A549 (cell line): ENCODE measurements at regions of chr17 and their contacts with region 1.

Region 1: GRCh38 chr17:62109378-62109902 is 44.4 kb upstream of the MED13 start:
- DNase-seq: peak; percentile 92
- ATAC-seq: peak; percentile 96 to 99
- H3K4me3 ChIP-seq: no peak overlapping the region
- H3K27ac ChIP-seq: 0 out of 6 replicates have a peak overlapping the region, but pooled peaks of 1 of the 2 experiments have one; percentile 6
- H3K4me1 ChIP-seq: peaks cover 26% of the 10 kb centered on the region
- CTCF ChIP-seq: peak; percentile 99
- EP300 ChIP-seq: no peak
- POLR2A ChIP-seq: no peak
- RAD21 ChIP-seq: peak; percentile 99 to 100

Region 2: DNA sequence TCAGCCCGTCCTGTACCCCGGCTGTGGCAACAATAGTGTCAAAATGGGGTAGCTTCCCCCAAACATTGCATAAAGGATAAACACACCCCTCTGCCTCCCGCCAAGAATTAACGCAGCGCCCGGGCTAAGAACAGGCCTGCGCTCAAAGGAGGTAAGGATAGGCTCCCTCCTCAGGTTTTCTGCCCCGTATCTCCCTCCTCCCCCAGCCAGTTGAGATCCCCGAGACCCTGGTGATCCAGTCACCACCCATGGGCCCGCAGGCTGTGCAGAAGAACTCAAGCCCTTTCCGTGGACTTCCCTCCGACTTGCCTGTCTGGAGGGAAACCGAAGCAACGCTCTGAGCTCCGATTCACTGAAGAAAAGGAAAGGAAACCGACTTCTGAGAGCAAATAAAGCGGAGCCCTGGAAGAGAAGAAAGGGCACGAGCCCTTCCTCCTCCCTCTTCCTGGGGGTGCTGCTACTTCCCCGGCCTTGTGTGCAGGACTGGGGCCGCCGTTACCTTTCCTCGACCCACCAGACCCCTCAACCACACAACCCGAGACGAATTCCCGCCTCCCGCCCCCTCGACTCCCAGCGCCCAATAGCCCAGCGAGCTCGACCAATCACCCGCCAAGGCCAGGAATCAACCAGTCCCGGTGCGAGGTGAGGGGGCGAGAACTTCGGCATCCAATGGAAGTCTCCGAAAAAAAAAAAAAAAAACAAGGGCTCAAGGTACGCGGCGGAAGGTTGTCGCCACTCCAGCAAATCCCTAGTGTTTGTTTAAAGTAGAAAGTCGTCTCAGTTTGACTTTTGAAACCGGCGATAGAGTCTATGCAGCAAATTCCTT is 246.3 kb before region 1 on chr17 and contains the start of gene BRIP1:
- CTCF ChIA-PET with region 1: interaction called, 11 read pairs
- POLR2A ChIA-PET with region 1: interaction called, 9 read pairs
- DNase-seq: peak; percentile 97 to 98
- ATAC-seq: peak; percentile 99
- H3K4me3 ChIP-seq: peak within 1 kb of the TSS; percentile 73
- H3K27ac ChIP-seq: peak within 1 kb of the TSS; percentile 77 to 85
- H3K4me1 ChIP-seq: peaks cover 20% of the 10 kb centered on the region; the same call in 2 of the 3 replicates
- CTCF ChIP-seq: no peak
- EP300 ChIP-seq: no peak
- POLR2A ChIP-seq: peak; percentile 58
- RAD21 ChIP-seq: no peak
- polyA plus RNA-seq, gene BRIP1: 8.8 and 11.5 TPM in 2 replicates

Region 3: DNA sequence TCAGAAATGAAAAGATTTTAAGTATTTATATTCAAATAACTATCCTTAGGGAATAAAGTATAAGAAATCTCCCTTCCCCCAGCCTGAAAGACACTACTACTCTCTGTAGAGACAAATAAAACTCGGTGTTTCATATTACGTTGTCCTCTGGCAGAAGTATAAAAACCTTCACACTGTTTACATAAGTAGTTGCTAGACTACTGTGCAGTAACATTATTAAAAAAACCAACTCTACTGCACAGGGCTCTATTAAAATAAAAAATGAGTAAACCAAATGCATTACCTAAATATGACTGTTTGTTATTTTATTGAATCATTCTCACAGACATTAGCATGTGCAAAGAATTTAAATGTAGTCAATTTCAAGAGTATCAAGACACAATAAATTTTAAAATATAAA is 111.8 kb before region 1 on chr17:
- CTCF ChIA-PET with region 1: interaction called, 13 read pairs
- POLR2A ChIA-PET with region 1: no interaction called
- DNase-seq: no peak
- ATAC-seq: peak in 1 of 2 experiments; percentile 43; a peak in 2 of 6 replicates
- H3K4me3 ChIP-seq: no peak overlapping the region
- H3K27ac ChIP-seq: no peak overlapping the region
- H3K4me1 ChIP-seq: peaks cover 13% of the 10 kb centered on the region; the same call in 2 of the 3 replicates
- CTCF ChIP-seq: no peak
- EP300 ChIP-seq: no peak
- POLR2A ChIP-seq: no peak
- RAD21 ChIP-seq: no peak

Region 4: DNA sequence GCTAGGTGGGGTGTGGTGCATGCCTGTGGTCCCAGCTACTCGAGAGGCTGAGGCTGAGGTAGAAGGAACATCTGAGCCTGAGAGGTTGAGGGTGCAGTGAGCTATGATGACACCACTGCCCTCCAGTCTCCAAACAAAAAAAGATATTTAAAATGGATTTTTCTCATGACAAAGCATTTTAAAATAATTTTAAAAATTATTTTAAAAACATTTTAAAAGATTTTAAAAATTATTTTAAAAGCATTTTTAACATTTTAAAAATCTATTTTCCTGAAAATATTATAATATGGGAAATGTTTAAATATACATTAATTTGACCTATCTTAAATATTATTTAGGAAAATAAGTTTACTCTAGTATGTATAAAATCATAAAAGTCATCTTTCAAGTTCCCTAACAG is 71.2 kb before region 1 on chr17:
- CTCF ChIA-PET with region 1: interaction called, 15 read pairs
- POLR2A ChIA-PET with region 1: no interaction called
- DNase-seq: no peak
- ATAC-seq: no peak
- H3K4me3 ChIP-seq: no peak overlapping the region
- H3K27ac ChIP-seq: peak overlapping the region in 1 of 2 experiments; percentile 33; a peak in 1 of 6 replicates
- H3K4me1 ChIP-seq: no peaks in the 10 kb centered on the region; the same call in 2 of the 3 replicates
- CTCF ChIP-seq: no peak
- EP300 ChIP-seq: no peak
- POLR2A ChIP-seq: no peak
- RAD21 ChIP-seq: no peak

Region 5: GRCh38 chr17:62065598-62066468 is 43.6 kb before region 1 on chr17:
- CTCF ChIA-PET with region 1: interaction called, 38 read pairs
- POLR2A ChIA-PET with region 1: interaction called, 17 read pairs
- DNase-seq: peak; percentile 98 to 99
- ATAC-seq: peak; percentile 93 to 98
- H3K4me3 ChIP-seq: peak overlapping the region; percentile 94
- H3K27ac ChIP-seq: peak overlapping the region; percentile 97
- H3K4me1 ChIP-seq: peaks cover 38% of the 10 kb centered on the region
- CTCF ChIP-seq: peak; percentile 99
- EP300 ChIP-seq: no peak
- POLR2A ChIP-seq: peak; percentile 75
- RAD21 ChIP-seq: peak; percentile 78

Region 6: DNA sequence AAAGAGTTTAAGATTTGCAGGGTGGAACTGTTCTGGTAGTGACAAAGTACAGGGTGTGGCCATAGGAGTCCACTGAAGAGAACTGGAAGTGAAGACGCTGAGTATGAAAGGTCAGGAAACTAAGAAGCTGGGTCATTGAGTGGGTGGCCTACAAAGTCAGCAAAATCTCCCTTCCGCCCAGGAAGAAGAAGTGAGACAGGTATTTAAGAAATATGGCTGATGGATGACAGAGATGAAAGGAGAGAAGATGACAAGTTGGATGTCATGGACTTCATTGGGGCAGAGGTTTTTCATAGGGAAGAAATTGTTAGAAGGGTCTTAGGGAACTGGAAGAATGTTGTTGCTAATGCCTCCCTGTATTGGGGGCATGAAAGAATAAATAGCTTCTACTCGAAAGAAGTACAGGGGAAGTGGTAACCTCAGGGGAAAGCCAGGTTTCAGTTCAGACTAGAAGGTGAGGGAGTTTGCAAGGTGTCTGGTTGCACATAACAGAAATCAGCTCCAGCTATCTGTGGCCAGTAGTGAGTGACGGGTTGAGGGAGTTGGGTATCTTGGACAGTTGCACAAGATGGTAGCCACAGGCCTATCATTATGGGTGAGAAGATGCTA is 10.7 kb before region 1 on chr17:
- CTCF ChIA-PET with region 1: interaction called, 145 read pairs
- POLR2A ChIA-PET with region 1: no interaction called
- DNase-seq: no peak
- ATAC-seq: no peak
- H3K4me3 ChIP-seq: no peak overlapping the region
- H3K27ac ChIP-seq: no peak overlapping the region
- H3K4me1 ChIP-seq: peaks cover 10% of the 10 kb centered on the region
- CTCF ChIP-seq: no peak
- EP300 ChIP-seq: no peak
- POLR2A ChIP-seq: no peak
- RAD21 ChIP-seq: no peak

Region 7: GRCh38 chr17:62134397-62134796 is 25.0 kb after region 1 on chr17:
- CTCF ChIA-PET with region 1: interaction called, 15 read pairs
- POLR2A ChIA-PET with region 1: no interaction called
- DNase-seq: peak in 1 of 2 experiments; percentile 40
- ATAC-seq: peak in 1 of 2 experiments; percentile 70; a peak in 3 of 6 replicates
- H3K4me3 ChIP-seq: no peak overlapping the region
- H3K27ac ChIP-seq: peak overlapping the region in 1 of 2 experiments; percentile 51; a peak in 3 of 6 replicates
- H3K4me1 ChIP-seq: peaks cover 26% of the 10 kb centered on the region
- CTCF ChIP-seq: no peak
- EP300 ChIP-seq: no peak
- POLR2A ChIP-seq: no peak
- RAD21 ChIP-seq: no peak

Region 8: DNA sequence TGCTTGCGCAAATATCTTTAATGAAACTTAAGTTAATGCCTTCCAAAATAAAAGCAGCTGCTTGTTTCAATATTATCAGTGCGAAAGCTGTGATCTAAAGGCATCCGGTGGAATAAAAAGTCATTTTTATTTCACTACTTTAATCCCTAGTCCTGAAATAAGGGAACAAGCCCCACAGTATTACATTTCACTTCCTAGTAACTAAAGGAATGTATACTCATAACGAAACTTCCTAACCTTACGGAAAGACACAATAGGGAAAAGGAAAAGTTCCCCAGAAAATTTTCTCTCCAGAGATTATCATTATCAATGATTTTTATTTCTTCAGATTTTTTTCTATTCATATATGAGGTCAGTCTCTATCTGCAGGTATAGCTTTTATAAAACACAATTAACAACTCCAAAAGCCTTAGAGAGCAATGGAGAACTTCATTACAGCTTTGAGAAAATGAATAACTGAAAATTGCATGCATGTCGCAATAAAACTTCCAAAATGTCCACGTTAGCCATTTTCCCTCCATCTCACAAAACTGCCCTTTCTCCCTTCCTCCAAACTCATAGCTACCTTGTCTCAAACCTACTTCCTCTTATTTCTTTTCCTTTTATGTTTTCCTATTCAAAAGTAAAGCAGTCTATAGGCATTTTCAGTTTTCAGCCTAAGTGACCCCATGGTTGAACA is 109.9 kb after region 1 on chr17:
- CTCF ChIA-PET with region 1: no interaction called
- POLR2A ChIA-PET with region 1: no interaction called
- DNase-seq: no peak
- ATAC-seq: no peak
- H3K4me3 ChIP-seq: no peak overlapping the region
- H3K27ac ChIP-seq: no peak overlapping the region
- H3K4me1 ChIP-seq: no peaks in the 10 kb centered on the region
- CTCF ChIP-seq: no peak
- EP300 ChIP-seq: no peak
- POLR2A ChIP-seq: no peak
- RAD21 ChIP-seq: no peak